H1 (cell line): ENCODE measurements at regions of chr1 and their contacts with region 1.

Region 1: GRCh38 chr1:23081376-23081775 is 62.1 kb downstream of the KDM1A start:
- DNase-seq: no peak
- H3K4me3 ChIP-seq: no peak overlapping the region
- H3K27ac ChIP-seq: no peak overlapping the region
- H3K4me1 ChIP-seq: no peaks in the 10 kb centered on the region
- H3K27me3 ChIP-seq: no peaks in the 10 kb centered on the region
- CTCF ChIP-seq: peak in 2 of 3 experiments; percentile 32 to 60; a peak in 2 of 4 replicates
- EP300 ChIP-seq: no peak
- POLR2A ChIP-seq: peak in 1 of 2 experiments; percentile 46; a peak in 1 of 3 replicates
- RAD21 ChIP-seq: peak; percentile 36 to 48; a peak in 3 of 4 replicates

Region 2: DNA sequence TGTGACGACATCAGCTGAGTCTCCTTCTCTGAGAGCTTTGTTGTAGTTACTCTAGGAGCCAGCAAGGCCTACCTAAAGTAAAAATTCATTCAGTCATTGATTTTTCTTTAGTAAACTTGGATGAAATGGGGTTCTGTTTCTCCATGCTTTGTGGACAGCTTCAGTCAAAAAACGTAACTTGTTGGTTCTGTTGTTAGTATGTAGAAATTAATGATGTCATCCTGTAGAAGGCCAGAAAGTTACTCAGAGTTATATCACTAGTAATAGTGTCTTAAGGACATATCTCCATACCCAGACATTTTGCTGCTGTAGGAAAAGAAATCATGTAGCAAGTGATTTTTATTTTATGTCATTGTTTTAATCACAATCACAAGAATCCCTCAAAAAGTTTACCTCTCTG is 19.1 kb before region 1 on chr1:
- CTCF ChIA-PET with region 1: interaction called, 11 read pairs
- POLR2A ChIA-PET with region 1: interaction called, 4 read pairs
- DNase-seq: no peak
- H3K4me3 ChIP-seq: no peak overlapping the region
- H3K27ac ChIP-seq: no peak overlapping the region
- H3K4me1 ChIP-seq: no peaks in the 10 kb centered on the region
- H3K27me3 ChIP-seq: no peaks in the 10 kb centered on the region
- CTCF ChIP-seq: no peak
- EP300 ChIP-seq: no peak
- POLR2A ChIP-seq: no peak
- RAD21 ChIP-seq: no peak

Region 3: DNA sequence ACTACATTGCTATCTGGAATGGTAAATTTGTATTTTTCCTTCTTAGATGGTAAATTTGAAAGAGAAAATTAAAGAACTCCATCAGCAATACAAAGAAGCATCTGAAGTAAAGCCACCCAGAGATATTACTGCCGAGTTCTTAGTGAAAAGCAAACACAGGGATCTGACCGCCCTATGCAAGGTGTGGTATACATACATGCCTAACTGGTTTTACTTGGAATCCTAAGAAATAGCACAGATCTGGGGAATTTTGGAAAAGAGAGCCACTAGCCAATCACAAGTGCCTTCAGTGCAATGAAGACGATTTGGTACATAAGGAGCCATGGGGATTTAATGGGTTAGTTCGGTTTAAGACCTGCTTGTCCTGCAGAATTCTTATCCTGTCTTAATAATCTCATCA is 10.2 kb before region 1 on chr1:
- CTCF ChIA-PET with region 1: interaction called, 11 read pairs
- POLR2A ChIA-PET with region 1: interaction called, 6 read pairs
- DNase-seq: no peak
- H3K4me3 ChIP-seq: no peak overlapping the region
- H3K27ac ChIP-seq: no peak overlapping the region
- H3K4me1 ChIP-seq: no peaks in the 10 kb centered on the region
- H3K27me3 ChIP-seq: no peaks in the 10 kb centered on the region
- CTCF ChIP-seq: no peak
- EP300 ChIP-seq: no peak
- POLR2A ChIP-seq: no peak
- RAD21 ChIP-seq: no peak

Region 4: GRCh38 chr1:23092447-23092846 is 11.1 kb after region 1 on chr1:
- CTCF ChIA-PET with region 1: interaction called, 15 read pairs
- POLR2A ChIA-PET with region 1: interaction called, 13 read pairs
- DNase-seq: no peak
- H3K4me3 ChIP-seq: no peak overlapping the region
- H3K27ac ChIP-seq: no peak overlapping the region
- H3K4me1 ChIP-seq: no peaks in the 10 kb centered on the region; a peak in 1 of 7 replicates
- H3K27me3 ChIP-seq: no peaks in the 10 kb centered on the region
- CTCF ChIP-seq: no peak
- EP300 ChIP-seq: no peak
- POLR2A ChIP-seq: no peak
- RAD21 ChIP-seq: no peak

Region 5: GRCh38 chr1:23198373-23198772 is 117.0 kb after region 1 on chr1:
- CTCF ChIA-PET with region 1: no interaction called
- POLR2A ChIA-PET with region 1: no interaction called
- DNase-seq: no peak
- H3K4me3 ChIP-seq: no peak overlapping the region
- H3K27ac ChIP-seq: no peak overlapping the region
- H3K4me1 ChIP-seq: 0 out of 7 replicates have a peak, but pooled peaks cover 0 to 3% (median 0%) of the 10 kb centered on the region in 4 experiments
- H3K27me3 ChIP-seq: no peaks in the 10 kb centered on the region
- CTCF ChIP-seq: no peak
- EP300 ChIP-seq: no peak
- POLR2A ChIP-seq: no peak
- RAD21 ChIP-seq: no peak